PC-3 (cell line): ENCODE measurements at regions of chr1 and their contacts with region 1.

Region 1: DNA sequence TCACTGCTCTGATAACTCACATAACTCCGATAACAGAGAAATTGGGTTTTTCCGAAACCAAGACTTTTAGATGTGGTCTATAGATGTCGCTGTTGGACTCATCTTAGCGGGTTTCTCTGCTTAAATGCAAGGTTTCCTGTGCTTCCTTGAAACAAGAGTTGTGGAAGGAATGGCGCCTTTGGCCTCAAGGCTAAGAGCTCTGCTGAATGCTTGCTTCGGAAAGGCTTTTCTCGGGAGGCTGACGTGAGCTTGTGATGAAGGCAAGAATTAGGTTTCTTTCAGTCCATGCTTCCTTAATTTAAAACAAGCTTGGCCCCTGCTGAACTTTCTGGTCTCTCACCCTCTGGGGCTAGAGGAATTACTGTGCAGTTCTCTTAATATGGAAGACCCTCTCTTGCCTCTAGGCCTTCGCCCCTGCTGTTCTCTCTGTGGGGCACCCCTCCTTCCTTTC is 113.5 kb downstream of the MAP3K21 start:
- DNase-seq: peak; percentile 96
- ATAC-seq: peak; percentile 41
- H3K4me3 ChIP-seq: no peak overlapping the region
- H3K27ac ChIP-seq: no peak overlapping the region
- H3K4me1 ChIP-seq: peaks cover 30% of the 10 kb centered on the region
- H3K27me3 ChIP-seq: no peaks in the 10 kb centered on the region
- CTCF ChIP-seq: peak; percentile 93

Region 2: DNA sequence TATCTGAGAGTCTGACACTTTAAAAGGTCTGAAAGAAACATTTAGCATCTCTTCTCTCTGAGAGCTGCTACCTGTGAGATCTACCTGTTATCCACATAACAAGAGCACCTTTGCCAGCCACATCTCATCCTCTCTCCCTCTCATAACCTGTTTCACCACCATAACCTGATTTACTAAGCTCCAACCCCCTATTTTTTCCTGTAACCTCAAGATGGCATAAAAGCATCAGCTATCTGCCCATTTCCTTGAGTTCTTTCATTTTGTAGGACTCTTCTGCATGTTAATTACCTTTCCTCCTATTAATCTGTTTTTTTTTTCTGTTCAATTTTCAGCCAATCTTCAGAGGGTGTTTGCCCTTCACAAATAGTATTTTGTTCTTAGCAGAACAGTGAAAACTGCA is 36.4 kb after region 1 on chr1:
- CTCF ChIA-PET with region 1: no interaction called
- POLR2A ChIA-PET with region 1: no interaction called
- intact Hi-C with region 1: loop called (anchors 2 kb)
- DNase-seq: peak; percentile 41
- ATAC-seq: no peak
- H3K4me3 ChIP-seq: no peak overlapping the region
- H3K27ac ChIP-seq: no peak overlapping the region
- H3K4me1 ChIP-seq: peaks cover 18% of the 10 kb centered on the region
- H3K27me3 ChIP-seq: no peaks in the 10 kb centered on the region
- CTCF ChIP-seq: 0 out of 2 replicates have a peak, but pooled peaks have one; percentile 33

Region 3: DNA sequence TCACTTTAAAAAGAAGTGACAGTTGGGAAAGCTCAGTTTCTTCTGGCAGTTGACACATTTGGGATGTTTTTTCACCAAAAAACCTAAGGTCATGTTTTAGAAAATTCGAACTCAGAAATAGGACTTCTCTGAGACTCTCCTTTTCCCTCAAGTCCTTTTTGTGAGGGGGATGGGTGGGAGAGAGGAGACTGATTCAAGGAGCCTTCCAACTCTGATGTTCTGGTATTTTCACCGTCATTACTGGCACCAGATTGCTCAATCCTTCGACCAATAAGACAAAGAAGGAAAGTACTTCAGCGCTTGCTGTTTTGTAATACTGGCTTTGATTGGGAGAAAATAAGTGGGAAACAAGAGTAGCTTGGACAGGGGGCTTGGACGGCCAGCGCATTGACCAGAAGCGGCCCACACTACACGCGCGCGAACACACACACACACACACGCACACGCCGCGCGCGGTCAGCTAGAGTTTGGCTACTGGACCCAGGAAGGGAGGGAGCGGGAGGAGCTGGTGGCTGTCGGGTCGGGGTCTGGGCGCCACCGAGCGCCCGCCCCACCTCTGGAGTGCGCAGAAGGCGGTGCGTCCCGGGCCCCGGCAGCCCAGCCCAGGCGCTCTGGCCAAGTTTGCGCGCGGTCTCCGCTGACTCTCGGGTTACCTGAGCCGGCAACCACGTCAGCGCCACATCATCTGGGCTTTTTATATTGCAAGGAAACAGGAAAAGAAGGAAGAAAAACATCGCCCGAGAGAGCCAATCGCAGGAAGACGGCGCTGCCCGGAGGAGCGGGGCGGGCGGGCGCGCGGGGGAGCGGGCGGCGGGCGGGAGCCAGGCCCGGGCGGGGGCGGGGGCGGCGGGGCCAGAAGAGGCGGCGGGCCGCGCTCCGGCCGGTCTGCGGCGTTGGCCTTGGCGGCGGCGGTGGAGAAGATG is 172.5 kb after region 1 on chr1 and contains the start of gene KCNK1:
- CTCF ChIA-PET with region 1: interaction called, 3 read pairs
- POLR2A ChIA-PET with region 1: no interaction called
- intact Hi-C with region 1: loop called (anchors 1 kb)
- DNase-seq: peak; percentile 96
- ATAC-seq: peak; percentile 88
- H3K4me3 ChIP-seq: peak within 1 kb of the TSS; percentile 90
- H3K27ac ChIP-seq: peak within 1 kb of the TSS; percentile 86
- H3K4me1 ChIP-seq: peaks cover 24% of the 10 kb centered on the region
- H3K27me3 ChIP-seq: no peaks in the 10 kb centered on the region
- CTCF ChIP-seq: no peak
- total RNA-seq, gene KCNK1: 31.1 and 34.7 TPM in 2 replicates

Region 4: DNA sequence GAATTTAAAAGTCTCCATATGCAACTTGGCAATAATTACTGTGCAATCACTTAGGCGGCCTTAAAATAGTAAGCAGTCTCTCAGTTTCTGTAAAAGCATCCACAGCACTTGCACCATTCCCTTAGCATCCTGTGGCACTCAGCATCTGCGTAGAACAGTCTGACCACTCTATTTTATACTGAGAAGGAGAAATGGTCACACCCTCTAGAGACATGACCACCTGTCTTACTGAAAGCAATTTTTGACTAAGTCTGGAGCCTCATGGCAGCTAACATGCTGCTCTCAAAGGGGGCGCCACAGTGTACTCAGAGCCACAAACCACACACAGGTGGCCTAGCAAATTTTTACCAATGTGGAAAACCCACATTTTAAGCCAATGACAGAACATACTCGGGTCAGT is 234.9 kb after region 1 on chr1:
- CTCF ChIA-PET with region 1: no interaction called
- POLR2A ChIA-PET with region 1: no interaction called
- intact Hi-C with region 1: loop called (anchors 2 kb)
- DNase-seq: no peak
- ATAC-seq: no peak
- H3K4me3 ChIP-seq: no peak overlapping the region
- H3K27ac ChIP-seq: no peak overlapping the region
- H3K4me1 ChIP-seq: peaks cover 19% of the 10 kb centered on the region
- H3K27me3 ChIP-seq: no peaks in the 10 kb centered on the region
- CTCF ChIP-seq: peak; percentile 54

Region 5: GRCh38 chr1:233904633-233905415 is 463.8 kb after region 1 on chr1 and contains the start of gene SLC35F3:
- CTCF ChIA-PET with region 1: no interaction called
- POLR2A ChIA-PET with region 1: no interaction called
- intact Hi-C with region 1: loop called (anchors 2 kb)
- DNase-seq: peak; percentile 93
- ATAC-seq: peak; percentile 78
- H3K4me3 ChIP-seq: peak within 1 kb of the TSS; percentile 72
- H3K27ac ChIP-seq: peak within 1 kb of the TSS; percentile 85
- H3K4me1 ChIP-seq: peaks cover 39% of the 10 kb centered on the region
- H3K27me3 ChIP-seq: no peaks in the 10 kb centered on the region
- CTCF ChIP-seq: peak; percentile 72
- total RNA-seq, gene SLC35F3: 17.7 and 19.3 TPM in 2 replicates

Region 6: DNA sequence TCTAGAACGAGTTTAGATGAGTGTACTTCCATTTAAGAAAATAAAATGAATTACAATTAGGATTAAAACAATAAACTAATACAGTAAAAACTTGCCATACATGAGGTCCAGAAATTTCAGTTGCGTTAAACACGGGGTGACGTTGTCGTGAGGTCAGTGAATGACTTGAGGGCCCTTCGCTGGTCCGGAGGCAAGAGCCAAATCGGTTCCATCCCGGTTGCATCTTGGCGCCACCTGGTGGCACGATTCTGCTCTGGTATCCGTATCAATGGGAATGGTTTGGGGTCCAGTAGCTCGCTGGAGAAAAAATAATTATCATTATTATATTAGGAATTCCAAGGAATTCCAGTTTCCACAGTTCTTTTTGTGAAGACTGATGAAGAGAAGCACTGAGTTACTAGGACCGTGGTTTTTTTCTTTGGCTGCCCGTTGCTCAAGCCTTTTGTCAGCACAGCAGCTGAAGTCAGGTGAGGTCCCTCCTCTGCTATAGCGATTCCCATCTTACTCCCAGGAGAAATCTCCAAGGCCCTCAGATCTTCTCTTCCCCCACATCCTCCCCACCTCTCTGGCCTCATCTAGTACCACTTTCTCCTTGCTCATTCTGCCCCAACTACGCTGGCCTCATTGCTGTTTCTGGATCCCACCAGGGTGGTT is 624.9 kb after region 1 on chr1:
- CTCF ChIA-PET with region 1: interaction called, 6 read pairs
- POLR2A ChIA-PET with region 1: interaction called, 5 read pairs
- intact Hi-C with region 1: loop called (anchors 1 kb)
- DNase-seq: peak; percentile 95
- ATAC-seq: peak; percentile 48
- H3K4me3 ChIP-seq: no peak overlapping the region
- H3K27ac ChIP-seq: peak overlapping the region; percentile 53
- H3K4me1 ChIP-seq: peaks cover 43% of the 10 kb centered on the region
- H3K27me3 ChIP-seq: no peaks in the 10 kb centered on the region
- CTCF ChIP-seq: peak; percentile 95

Region 7: DNA sequence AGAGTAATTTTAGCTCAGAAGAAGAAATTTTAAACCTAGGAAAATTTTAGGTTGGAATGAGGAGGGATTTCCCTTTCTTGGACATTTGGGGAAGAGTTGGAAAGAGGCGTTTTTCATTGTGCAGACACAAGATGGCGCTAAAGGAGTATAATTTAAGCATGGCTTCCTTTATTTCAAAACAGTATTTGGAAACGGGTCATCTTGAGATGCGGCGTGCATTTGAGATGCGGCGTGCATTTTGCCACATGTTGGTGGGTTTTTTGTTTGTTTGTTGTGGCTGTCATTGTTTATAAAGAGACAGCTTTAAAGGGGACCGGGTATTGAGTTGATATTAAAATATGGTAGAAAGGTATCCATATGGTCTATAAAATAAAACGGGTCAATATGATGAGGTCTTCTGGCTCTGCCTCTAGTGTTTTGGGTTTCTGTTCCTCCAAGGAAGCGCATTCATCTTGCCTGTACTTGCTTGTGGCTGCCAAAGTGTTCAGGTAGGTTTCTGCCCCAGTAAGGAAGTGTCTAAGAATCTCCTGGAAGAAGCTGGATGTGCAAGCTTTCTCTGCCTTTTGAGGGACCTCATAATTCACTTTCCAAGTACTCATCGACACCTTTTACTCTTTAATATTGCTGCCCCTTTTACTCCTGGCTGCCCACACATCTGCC is 673.8 kb after region 1 on chr1:
- CTCF ChIA-PET with region 1: interaction called, 17 read pairs
- POLR2A ChIA-PET with region 1: no interaction called
- intact Hi-C with region 1: loop called (anchors 2 kb)
- DNase-seq: peak; percentile 85
- ATAC-seq: peak; percentile 65
- H3K4me3 ChIP-seq: peak overlapping the region; percentile 60
- H3K27ac ChIP-seq: no peak overlapping the region
- H3K4me1 ChIP-seq: peaks cover 2% of the 10 kb centered on the region
- H3K27me3 ChIP-seq: no peaks in the 10 kb centered on the region
- CTCF ChIP-seq: peak; percentile 92